ENCODE measurements at regions of chr14 and their contacts with region 1.

Region 1: GRCh38 chr14:77028384-77029231 is at the start of gene IRF2BPL:
- DNase-seq: peak; percentile 89
- ATAC-seq: peak; percentile 68
- H3K4me3 Mint-ChIP-seq: peak within 1 kb of the TSS; percentile 88
- H3K27ac Mint-ChIP-seq: peak within 1 kb of the TSS; percentile 93
- H3K4me1 Mint-ChIP-seq: peaks cover 50% of the 10 kb centered on the region
- H3K27me3 Mint-ChIP-seq: no peaks in the 10 kb centered on the region
- CTCF ChIP-seq: no peak
- total RNA-seq, gene IRF2BPL: 14.0 and 14.5 TPM in 2 replicates

Region 2: DNA sequence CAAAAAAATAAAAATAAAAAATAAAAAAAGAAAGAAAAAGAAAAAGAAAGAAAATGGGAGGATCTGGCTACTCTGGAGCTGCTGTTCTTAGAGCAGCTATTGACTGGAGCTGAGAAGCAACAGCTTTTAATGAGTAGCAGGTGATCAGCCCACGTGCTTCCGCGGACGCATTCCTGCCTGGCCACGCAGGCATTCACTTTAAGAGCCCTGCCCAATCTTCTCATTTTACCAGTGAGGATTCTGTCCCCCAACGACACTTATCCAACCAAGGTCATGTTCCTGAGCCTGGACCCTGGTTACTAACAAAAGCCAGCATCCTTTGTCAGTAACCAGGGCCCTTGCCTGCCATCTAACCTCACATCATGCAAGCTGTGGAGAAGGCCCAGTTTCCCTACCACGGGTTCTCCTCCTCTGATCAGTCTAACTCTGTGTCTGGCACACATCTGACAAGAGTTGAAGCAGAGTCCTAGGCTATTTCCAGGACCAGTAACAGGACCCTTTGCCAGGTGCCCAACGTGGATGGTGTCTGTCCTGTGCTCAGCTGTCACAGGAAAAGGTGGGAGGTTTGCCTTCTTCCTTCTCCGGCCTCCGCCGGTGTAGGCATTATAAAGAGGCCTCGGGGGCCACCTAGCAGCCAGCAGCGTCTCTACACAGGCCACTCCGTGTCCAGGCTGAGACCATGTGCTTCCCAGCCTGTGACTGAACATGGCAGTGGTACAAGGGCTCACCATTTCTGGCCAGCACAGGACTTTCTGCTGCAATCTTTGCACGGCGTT is 937.8 kb before region 1 on chr14:
- CTCF ChIA-PET with region 1: no interaction called
- POLR2A ChIA-PET with region 1: no interaction called
- intact Hi-C with region 1: no loop called
- DNase-seq: no peak
- ATAC-seq: no peak
- H3K4me3 Mint-ChIP-seq: no peak overlapping the region
- H3K27ac Mint-ChIP-seq: no peak overlapping the region
- H3K4me1 Mint-ChIP-seq: no peaks in the 10 kb centered on the region
- H3K27me3 Mint-ChIP-seq: no peaks in the 10 kb centered on the region
- CTCF ChIP-seq: no peak

Region 3: DNA sequence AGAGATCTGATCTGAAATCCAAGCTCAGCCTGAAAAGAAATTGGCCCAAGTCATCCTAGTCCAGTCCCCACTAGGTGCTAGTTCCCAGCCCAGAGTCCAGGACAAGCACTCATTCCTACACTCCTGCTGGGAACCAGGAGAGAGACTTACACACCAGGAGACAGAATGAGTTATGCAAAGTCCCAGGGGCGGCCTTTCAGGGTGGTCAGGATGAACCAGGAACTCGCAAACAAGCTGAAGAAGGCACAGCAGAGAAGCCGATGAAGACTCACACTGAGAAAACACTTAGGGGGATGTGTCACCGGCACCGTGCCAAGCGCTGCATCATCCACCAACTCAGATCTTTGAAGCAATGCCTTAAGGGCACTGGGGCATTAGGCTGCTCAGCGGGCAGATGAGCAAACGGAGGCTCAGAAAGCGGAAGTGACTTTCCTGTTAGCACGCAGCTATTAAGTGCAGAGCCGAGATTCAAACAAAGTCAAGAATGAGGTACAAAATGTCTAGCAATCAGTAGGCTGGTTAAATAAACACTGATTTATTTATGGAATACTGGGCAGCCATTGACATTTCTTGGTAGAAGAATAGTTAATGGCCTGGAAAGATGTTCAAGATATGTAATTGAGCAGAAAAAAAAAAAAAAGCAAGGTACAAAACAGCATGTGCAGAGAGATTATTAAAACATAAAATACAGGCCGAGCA is 123.7 kb before region 1 on chr14:
- CTCF ChIA-PET with region 1: no interaction called
- POLR2A ChIA-PET with region 1: interaction called, 16 read pairs
- intact Hi-C with region 1: loop called (anchors 1 kb)
- DNase-seq: peak; percentile 73
- ATAC-seq: peak; percentile 92
- H3K4me3 Mint-ChIP-seq: peak overlapping the region; percentile 63
- H3K27ac Mint-ChIP-seq: peak overlapping the region; percentile 93
- H3K4me1 Mint-ChIP-seq: peaks cover 39% of the 10 kb centered on the region
- H3K27me3 Mint-ChIP-seq: no peaks in the 10 kb centered on the region
- CTCF ChIP-seq: no peak

Region 4: DNA sequence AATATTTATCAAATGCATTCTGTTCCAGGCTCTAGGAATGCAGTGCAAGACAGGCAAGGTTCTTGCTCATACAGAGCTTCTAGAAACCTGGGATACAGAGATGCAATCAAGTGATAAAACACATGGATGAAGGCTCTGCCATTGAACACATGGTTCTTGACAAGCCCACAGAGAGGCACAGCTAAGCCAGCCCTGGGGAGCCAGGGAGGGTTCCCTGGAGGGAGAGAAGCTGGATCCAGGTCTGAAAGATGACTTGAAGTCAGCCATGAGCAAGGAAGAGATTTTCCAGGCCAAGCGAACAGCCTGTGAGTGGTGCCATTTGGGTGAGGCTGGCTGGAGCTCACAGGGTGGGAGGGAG is 66.3 kb before region 1 on chr14:
- CTCF ChIA-PET with region 1: interaction called, 10 read pairs
- POLR2A ChIA-PET with region 1: interaction called, 149 read pairs
- intact Hi-C with region 1: loop called (anchors 1 kb)
- DNase-seq: no peak
- ATAC-seq: no peak
- H3K4me3 Mint-ChIP-seq: peak overlapping the region; percentile 84
- H3K27ac Mint-ChIP-seq: peak overlapping the region; percentile 94
- H3K4me1 Mint-ChIP-seq: peaks cover 78% of the 10 kb centered on the region
- H3K27me3 Mint-ChIP-seq: no peaks in the 10 kb centered on the region
- CTCF ChIP-seq: no peak

Region 5: GRCh38 chr14:77040059-77040740 is 11.6 kb after region 1 on chr14:
- CTCF ChIA-PET with region 1: interaction called, 10 read pairs
- POLR2A ChIA-PET with region 1: interaction called, 140 read pairs
- intact Hi-C with region 1: loop called (anchors 1 kb)
- DNase-seq: peak; percentile 85
- ATAC-seq: peak; percentile 70
- H3K4me3 Mint-ChIP-seq: peak overlapping the region; percentile 80
- H3K27ac Mint-ChIP-seq: peak overlapping the region; percentile 96
- H3K4me1 Mint-ChIP-seq: peaks cover 89% of the 10 kb centered on the region
- H3K27me3 Mint-ChIP-seq: no peaks in the 10 kb centered on the region
- CTCF ChIP-seq: no peak

Region 6: GRCh38 chr14:77097700-77098528 is 69.3 kb after region 1 on chr14 and contains the start of gene CIPC:
- CTCF ChIA-PET with region 1: no interaction called
- POLR2A ChIA-PET with region 1: interaction called, 3 read pairs
- intact Hi-C with region 1: loop called (anchors 1 kb)
- DNase-seq: peak; percentile 96
- ATAC-seq: peak; percentile 86
- H3K4me3 Mint-ChIP-seq: peak within 1 kb of the TSS; percentile 99
- H3K27ac Mint-ChIP-seq: peak within 1 kb of the TSS; percentile 98
- H3K4me1 Mint-ChIP-seq: peaks cover 72% of the 10 kb centered on the region
- H3K27me3 Mint-ChIP-seq: no peaks in the 10 kb centered on the region
- CTCF ChIP-seq: no peak
- total RNA-seq, gene CIPC: 26.6 and 28.5 TPM in 2 replicates

Region 7: DNA sequence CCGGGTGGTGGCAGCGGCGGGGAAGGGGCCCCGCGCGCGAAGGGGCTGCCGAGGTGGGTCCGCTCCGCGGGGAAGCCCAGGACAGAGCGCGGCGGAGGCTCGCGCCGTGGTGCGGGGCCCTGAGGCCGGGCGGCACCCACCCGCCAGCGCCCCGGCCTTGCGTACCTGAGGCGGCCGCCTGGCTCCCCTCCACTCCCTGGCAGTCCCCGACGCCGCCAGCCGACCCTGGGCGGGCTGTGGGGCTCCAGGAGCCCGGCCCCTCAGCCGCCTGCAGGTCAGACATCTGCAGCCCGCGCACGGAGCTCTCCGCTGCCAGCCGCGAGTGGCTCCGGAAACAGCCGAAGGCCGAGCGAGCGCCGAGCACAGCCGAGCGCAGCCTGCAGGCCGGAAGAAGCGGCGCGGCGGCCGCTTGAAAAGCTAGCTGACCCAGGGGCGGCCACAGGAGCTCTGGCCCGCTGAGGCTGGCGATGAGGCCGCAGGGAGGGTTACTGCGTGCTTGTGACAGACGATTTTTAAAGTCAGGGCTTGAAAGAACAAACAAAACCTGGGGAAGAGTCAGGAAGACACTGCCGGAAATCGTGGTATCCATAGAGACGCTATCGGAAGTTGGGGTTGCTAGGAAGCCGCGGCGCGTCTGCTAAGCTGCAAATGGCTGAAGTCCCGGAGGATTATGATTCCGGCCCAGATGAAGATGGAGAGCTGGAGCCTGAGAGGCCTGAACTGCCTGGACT is 348.3 kb after region 1 on chr14 and contains the starts of genes SAMD15 and TMED8:
- CTCF ChIA-PET with region 1: no interaction called
- POLR2A ChIA-PET with region 1: no interaction called
- intact Hi-C with region 1: loop called (anchors 5 kb)
- DNase-seq: peak; percentile 85
- ATAC-seq: peak; percentile 89
- H3K4me3 Mint-ChIP-seq: peak within 1 kb of the TSS; percentile 93
- H3K27ac Mint-ChIP-seq: peak within 1 kb of the TSS; percentile 93
- H3K4me1 Mint-ChIP-seq: peaks cover 39% of the 10 kb centered on the region
- H3K27me3 Mint-ChIP-seq: no peaks in the 10 kb centered on the region
- CTCF ChIP-seq: no peak
- total RNA-seq, gene SAMD15: 0.71 and 1.00 TPM in 2 replicates
- total RNA-seq, gene TMED8: 29.9 and 31.3 TPM in 2 replicates

Region 8: GRCh38 chr14:77470192-77470870 is 441.7 kb after region 1 on chr14:
- CTCF ChIA-PET with region 1: no interaction called
- POLR2A ChIA-PET with region 1: no interaction called
- intact Hi-C with region 1: no loop called
- DNase-seq: no peak
- ATAC-seq: no peak
- H3K4me3 Mint-ChIP-seq: no peak overlapping the region
- H3K27ac Mint-ChIP-seq: no peak overlapping the region
- H3K4me1 Mint-ChIP-seq: no peaks in the 10 kb centered on the region
- H3K27me3 Mint-ChIP-seq: no peaks in the 10 kb centered on the region
- CTCF ChIP-seq: no peak